ENCODE measurements at regions of chr4 and their contacts with region 1.

Region 1: GRCh38 chr4:154416190-154416547 is 75.4 kb downstream of the DCHS2 start:
- DNase-seq: peak; percentile 37

Region 2: DNA sequence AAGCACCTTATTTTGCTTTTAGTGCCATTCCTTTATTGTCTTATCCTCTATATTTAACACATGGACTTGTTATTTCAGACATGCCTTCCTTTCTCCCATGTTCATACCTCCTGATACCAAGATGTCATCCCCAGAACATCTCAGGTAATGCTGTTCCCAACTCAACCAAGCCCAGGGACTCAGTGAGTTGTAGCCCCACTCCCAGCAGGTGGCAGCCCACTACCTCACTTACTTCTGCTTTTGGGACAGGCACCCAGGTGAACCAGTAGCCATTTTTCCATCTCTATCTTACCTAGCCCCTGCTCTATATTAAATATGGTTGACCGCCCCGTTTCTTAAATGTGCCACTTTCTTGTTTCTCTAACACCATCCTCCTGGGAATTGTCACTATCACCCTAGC is 123.6 kb before region 1 on chr4:
- CTCF ChIA-PET with region 1: no interaction called
- POLR2A ChIA-PET with region 1: no interaction called
- DNase-seq: no peak

Region 3: GRCh38 chr4:154491341-154492271 is 75.4 kb after region 1 on chr4 and contains the start of gene DCHS2:
- CTCF ChIA-PET with region 1: interaction called, 3 read pairs
- POLR2A ChIA-PET with region 1: interaction called, 10 read pairs
- DNase-seq: peak; percentile 45

Measured in HEK293T (cell line).